CD8-positive, alpha-beta T cell (primary cell): ENCODE measurements at regions of chr2 and their contacts with region 1.

Region 1: GRCh38 chr2:10408649-10409579 is 39.2 kb downstream of the ODC1 start:
- DNase-seq: peak; percentile 64 to 90 (median 83)
- ATAC-seq: peak; percentile 83
- H3K4me3 ChIP-seq: peak overlapping the region in 1 of 2 experiments; percentile 15
- H3K4me3 Mint-ChIP-seq: peak overlapping the region; percentile 80
- H3K27ac ChIP-seq: peak overlapping the region; percentile 24 to 75
- H3K27ac Mint-ChIP-seq: peak overlapping the region; percentile 94
- H3K4me1 ChIP-seq: peaks cover 40% of the 10 kb centered on the region
- H3K4me1 Mint-ChIP-seq: peaks cover 40% of the 10 kb centered on the region
- H3K27me3 ChIP-seq: no peaks in the 10 kb centered on the region
- H3K27me3 Mint-ChIP-seq: no peaks in the 10 kb centered on the region
- CTCF ChIP-seq: peak; percentile 87

Region 2: GRCh38 chr2:9205963-9206948 is 1202.7 kb before region 1 on chr2 and contains the start of gene ASAP2:
- CTCF ChIA-PET with region 1: no interaction called
- POLR2A ChIA-PET with region 1: no interaction called
- intact Hi-C with region 1: no loop called
- DNase-seq: peak in 4 of 9 experiments; percentile 16 to 52 (median 40)
- ATAC-seq: no peak
- H3K4me3 ChIP-seq: peak within 1 kb of the TSS; percentile 3 to 41
- H3K4me3 Mint-ChIP-seq: peak within 1 kb of the TSS; percentile 51
- H3K27ac ChIP-seq: no peak within 1 kb of the TSS
- H3K27ac Mint-ChIP-seq: no peak within 1 kb of the TSS
- H3K4me1 ChIP-seq: no peaks in the 10 kb centered on the region
- H3K4me1 Mint-ChIP-seq: peaks cover 6% of the 10 kb centered on the region
- H3K27me3 ChIP-seq: peaks cover 9 to 10% of the 10 kb centered on the region in 2 experiments
- H3K27me3 Mint-ChIP-seq: peaks cover 52% of the 10 kb centered on the region
- CTCF ChIP-seq: no peak
- total RNA-seq, gene ASAP2: not detected

Region 3: DNA sequence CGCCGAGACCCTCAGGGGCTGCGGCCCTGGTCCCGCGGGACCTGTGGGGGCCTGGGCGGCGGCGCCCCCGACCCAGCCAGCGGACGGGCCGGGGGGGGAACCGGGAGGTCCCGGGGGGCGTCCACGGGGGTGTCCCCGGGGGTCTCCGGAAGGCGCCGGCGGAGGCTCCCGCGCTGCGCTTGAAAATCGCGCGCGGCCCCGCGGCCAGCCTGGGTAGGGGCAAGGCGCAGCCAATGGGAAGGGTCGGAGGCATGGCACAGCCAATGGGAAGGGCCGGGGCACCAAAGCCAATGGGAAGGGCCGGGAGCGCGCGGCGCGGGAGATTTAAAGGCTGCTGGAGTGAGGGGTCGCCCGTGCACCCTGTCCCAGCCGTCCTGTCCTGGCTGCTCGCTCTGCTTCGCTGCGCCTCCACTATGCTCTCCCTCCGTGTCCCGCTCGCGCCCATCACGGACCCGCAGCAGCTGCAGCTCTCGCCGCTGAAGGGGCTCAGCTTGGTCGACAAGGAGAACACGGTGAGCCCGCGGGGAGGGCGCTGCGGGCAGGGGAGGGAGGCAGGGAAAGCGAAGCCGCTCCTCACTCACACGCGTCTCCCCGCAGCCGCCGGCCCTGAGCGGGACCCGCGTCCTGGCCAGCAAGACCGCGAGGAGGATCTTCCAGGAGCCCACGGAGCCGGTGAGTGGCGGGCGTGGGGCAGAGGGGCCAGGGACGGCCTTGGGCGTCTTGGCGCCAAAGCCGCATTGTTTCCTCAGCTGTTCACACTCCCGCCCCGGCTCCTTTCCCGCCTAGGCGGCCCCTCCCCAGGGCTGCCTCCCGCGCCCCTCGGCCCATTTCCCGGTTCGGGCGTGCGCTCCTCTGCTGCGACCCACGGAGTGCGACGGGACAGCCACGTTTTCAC is 286.3 kb before region 1 on chr2 and contains the start of gene RRM2:
- CTCF ChIA-PET with region 1: interaction called, 93 read pairs
- POLR2A ChIA-PET with region 1: interaction called, 3 read pairs
- intact Hi-C with region 1: loop called (anchors 1 kb)
- DNase-seq: peak; percentile 75 to 93 (median 87)
- ATAC-seq: peak; percentile 75
- H3K4me3 ChIP-seq: peak within 1 kb of the TSS; percentile 49 to 60
- H3K4me3 Mint-ChIP-seq: peak within 1 kb of the TSS; percentile 96
- H3K27ac ChIP-seq: no peak within 1 kb of the TSS
- H3K27ac Mint-ChIP-seq: no peak within 1 kb of the TSS
- H3K4me1 ChIP-seq: peaks cover 33% of the 10 kb centered on the region
- H3K4me1 Mint-ChIP-seq: peaks cover 44% of the 10 kb centered on the region
- H3K27me3 ChIP-seq: peaks cover 13 to 17% of the 10 kb centered on the region in 2 experiments
- H3K27me3 Mint-ChIP-seq: peaks cover 19% of the 10 kb centered on the region
- CTCF ChIP-seq: no peak
- total RNA-seq, gene RRM2: 1.6 to 2.1 TPM

Region 4: DNA sequence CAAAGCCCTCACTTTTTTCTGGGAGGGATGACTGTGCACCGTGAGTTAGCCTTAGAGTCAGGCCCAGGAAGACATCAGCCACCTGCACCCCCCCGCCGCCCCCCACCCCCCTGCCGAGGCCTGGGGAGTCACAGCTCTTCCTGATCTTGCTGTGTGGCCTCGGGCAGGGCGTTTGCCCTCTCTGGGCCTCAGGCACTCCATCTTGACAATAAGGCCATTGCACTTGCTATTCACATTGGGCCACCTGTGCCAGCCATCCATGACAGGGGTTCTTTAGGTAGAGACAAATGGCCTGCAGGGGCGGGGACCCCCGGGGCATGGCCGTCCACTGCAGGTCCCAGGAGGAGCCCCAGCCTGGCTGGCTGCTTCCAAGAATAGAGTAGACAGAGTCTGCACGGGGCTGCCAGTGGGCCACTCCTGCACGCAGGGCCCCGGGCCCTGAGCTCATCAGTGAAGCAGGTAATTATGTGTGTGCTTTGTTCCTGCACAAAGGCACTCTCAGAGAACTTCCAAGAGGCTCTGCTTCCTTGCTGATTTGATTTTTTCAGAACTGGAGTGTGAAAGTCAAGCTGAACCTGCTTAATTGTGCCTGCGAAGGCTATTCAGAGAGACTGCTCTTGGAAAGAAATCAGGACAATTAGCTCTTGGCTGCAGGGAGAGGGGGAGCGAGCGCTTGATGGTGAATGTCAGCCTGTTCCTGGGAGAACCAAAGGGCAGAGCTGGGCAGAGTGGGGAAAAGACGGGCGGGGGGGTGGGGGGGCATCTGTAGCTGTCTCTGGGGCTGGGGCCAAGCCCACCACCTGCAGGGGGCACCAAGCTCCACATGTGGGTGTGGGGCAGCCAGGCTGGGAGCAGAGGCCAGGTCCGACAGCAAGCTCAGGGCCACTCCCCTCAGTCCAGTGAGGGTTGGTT is 246.1 kb before region 1 on chr2:
- CTCF ChIA-PET with region 1: interaction called, 10 read pairs
- POLR2A ChIA-PET with region 1: no interaction called
- intact Hi-C with region 1: no loop called
- DNase-seq: peak in 3 of 9 experiments; percentile 23 to 30 (median 29)
- ATAC-seq: no peak
- H3K4me3 ChIP-seq: no peak overlapping the region
- H3K4me3 Mint-ChIP-seq: no peak overlapping the region
- H3K27ac ChIP-seq: no peak overlapping the region
- H3K27ac Mint-ChIP-seq: no peak overlapping the region
- H3K4me1 ChIP-seq: no peaks in the 10 kb centered on the region
- H3K4me1 Mint-ChIP-seq: peaks cover 2% of the 10 kb centered on the region
- H3K27me3 ChIP-seq: no peaks in the 10 kb centered on the region
- H3K27me3 Mint-ChIP-seq: no peaks in the 10 kb centered on the region
- CTCF ChIP-seq: no peak

Region 5: GRCh38 chr2:10204326-10205161 is 204.4 kb before region 1 on chr2:
- CTCF ChIA-PET with region 1: no interaction called
- POLR2A ChIA-PET with region 1: no interaction called
- intact Hi-C with region 1: no loop called
- DNase-seq: no peak
- ATAC-seq: no peak
- H3K4me3 ChIP-seq: no peak overlapping the region
- H3K4me3 Mint-ChIP-seq: no peak overlapping the region
- H3K27ac ChIP-seq: no peak overlapping the region
- H3K27ac Mint-ChIP-seq: no peak overlapping the region
- H3K4me1 ChIP-seq: no peaks in the 10 kb centered on the region
- H3K4me1 Mint-ChIP-seq: no peaks in the 10 kb centered on the region
- H3K27me3 ChIP-seq: no peaks in the 10 kb centered on the region
- H3K27me3 Mint-ChIP-seq: no peaks in the 10 kb centered on the region
- CTCF ChIP-seq: no peak

Region 6: GRCh38 chr2:10285556-10286198 is 123.2 kb before region 1 on chr2:
- CTCF ChIA-PET with region 1: interaction called, 14 read pairs
- POLR2A ChIA-PET with region 1: no interaction called
- intact Hi-C with region 1: no loop called
- DNase-seq: no peak
- ATAC-seq: no peak
- H3K4me3 ChIP-seq: no peak overlapping the region
- H3K4me3 Mint-ChIP-seq: no peak overlapping the region
- H3K27ac ChIP-seq: no peak overlapping the region
- H3K27ac Mint-ChIP-seq: no peak overlapping the region
- H3K4me1 ChIP-seq: no peaks in the 10 kb centered on the region
- H3K4me1 Mint-ChIP-seq: no peaks in the 10 kb centered on the region
- H3K27me3 ChIP-seq: no peaks in the 10 kb centered on the region
- H3K27me3 Mint-ChIP-seq: no peaks in the 10 kb centered on the region
- CTCF ChIP-seq: no peak

Region 7: GRCh38 chr2:10331027-10331701 is 77.8 kb before region 1 on chr2:
- CTCF ChIA-PET with region 1: interaction called, 88 read pairs
- POLR2A ChIA-PET with region 1: interaction called, 27 read pairs
- intact Hi-C with region 1: loop called (anchors 1 kb)
- DNase-seq: peak; percentile 34 to 85 (median 76)
- ATAC-seq: peak; percentile 56
- H3K4me3 ChIP-seq: peak overlapping the region; percentile 56 to 80
- H3K4me3 Mint-ChIP-seq: peak overlapping the region; percentile 92
- H3K27ac ChIP-seq: peak overlapping the region; percentile 57 to 82
- H3K27ac Mint-ChIP-seq: peak overlapping the region; percentile 97
- H3K4me1 ChIP-seq: peaks cover 75% of the 10 kb centered on the region
- H3K4me1 Mint-ChIP-seq: peaks cover 86% of the 10 kb centered on the region
- H3K27me3 ChIP-seq: no peaks in the 10 kb centered on the region
- H3K27me3 Mint-ChIP-seq: no peaks in the 10 kb centered on the region
- CTCF ChIP-seq: no peak

Region 8: GRCh38 chr2:10389573-10389972 is 19.3 kb before region 1 on chr2:
- CTCF ChIA-PET with region 1: interaction called, 39 read pairs
- POLR2A ChIA-PET with region 1: no interaction called
- intact Hi-C with region 1: no loop called
- DNase-seq: no peak
- ATAC-seq: no peak
- H3K4me3 ChIP-seq: no peak overlapping the region
- H3K4me3 Mint-ChIP-seq: no peak overlapping the region
- H3K27ac ChIP-seq: no peak overlapping the region
- H3K27ac Mint-ChIP-seq: peak overlapping the region; percentile 83
- H3K4me1 ChIP-seq: peaks cover 65% of the 10 kb centered on the region
- H3K4me1 Mint-ChIP-seq: peaks cover 78% of the 10 kb centered on the region
- H3K27me3 ChIP-seq: no peaks in the 10 kb centered on the region
- H3K27me3 Mint-ChIP-seq: no peaks in the 10 kb centered on the region
- CTCF ChIP-seq: no peak